Activated naive CD4-positive, alpha-beta T cell treated with anti-CD3 and anti-CD28 coated beads for 36 hours (primary cell): ENCODE measurements at regions of chrX and their contacts with region 1.

Region 1: GRCh38 chrX:71671043-71671780 is 3.9 kb downstream of the LOC101059915 start:
- DNase-seq: peak; percentile 80
- H3K4me3 Mint-ChIP-seq: no peak overlapping the region
- H3K27ac Mint-ChIP-seq: no peak overlapping the region
- H3K4me1 Mint-ChIP-seq: peaks cover 20% of the 10 kb centered on the region
- H3K27me3 Mint-ChIP-seq: peaks cover 3% of the 10 kb centered on the region

Region 2: DNA sequence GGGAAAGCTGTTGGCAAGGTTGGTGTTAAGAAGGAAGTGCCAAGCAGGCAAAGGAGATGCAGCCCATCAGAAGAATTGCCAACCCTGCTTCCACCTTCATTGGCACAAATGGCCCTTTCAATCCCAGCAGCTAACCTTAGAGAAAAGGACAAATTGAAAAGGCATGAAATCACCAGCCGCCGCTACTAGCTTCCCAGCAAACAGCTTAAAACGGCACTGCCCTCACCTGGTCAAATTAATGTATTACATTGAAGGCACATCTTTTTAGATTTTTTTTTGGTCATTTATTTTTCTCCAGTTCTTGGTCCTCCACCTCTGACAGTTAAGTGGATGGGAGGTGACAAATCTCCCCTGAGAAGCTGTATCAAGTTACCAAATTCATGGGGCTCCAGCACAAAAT is 188.4 kb after region 1 on chrX:
- CTCF ChIA-PET with region 1: interaction called, 11 read pairs
- intact Hi-C with region 1: loop called (anchors 1 kb)
- DNase-seq: peak; percentile 58
- H3K4me3 Mint-ChIP-seq: no peak overlapping the region
- H3K27ac Mint-ChIP-seq: no peak overlapping the region
- H3K4me1 Mint-ChIP-seq: no peaks in the 10 kb centered on the region
- H3K27me3 Mint-ChIP-seq: peaks cover 3% of the 10 kb centered on the region

Region 3: DNA sequence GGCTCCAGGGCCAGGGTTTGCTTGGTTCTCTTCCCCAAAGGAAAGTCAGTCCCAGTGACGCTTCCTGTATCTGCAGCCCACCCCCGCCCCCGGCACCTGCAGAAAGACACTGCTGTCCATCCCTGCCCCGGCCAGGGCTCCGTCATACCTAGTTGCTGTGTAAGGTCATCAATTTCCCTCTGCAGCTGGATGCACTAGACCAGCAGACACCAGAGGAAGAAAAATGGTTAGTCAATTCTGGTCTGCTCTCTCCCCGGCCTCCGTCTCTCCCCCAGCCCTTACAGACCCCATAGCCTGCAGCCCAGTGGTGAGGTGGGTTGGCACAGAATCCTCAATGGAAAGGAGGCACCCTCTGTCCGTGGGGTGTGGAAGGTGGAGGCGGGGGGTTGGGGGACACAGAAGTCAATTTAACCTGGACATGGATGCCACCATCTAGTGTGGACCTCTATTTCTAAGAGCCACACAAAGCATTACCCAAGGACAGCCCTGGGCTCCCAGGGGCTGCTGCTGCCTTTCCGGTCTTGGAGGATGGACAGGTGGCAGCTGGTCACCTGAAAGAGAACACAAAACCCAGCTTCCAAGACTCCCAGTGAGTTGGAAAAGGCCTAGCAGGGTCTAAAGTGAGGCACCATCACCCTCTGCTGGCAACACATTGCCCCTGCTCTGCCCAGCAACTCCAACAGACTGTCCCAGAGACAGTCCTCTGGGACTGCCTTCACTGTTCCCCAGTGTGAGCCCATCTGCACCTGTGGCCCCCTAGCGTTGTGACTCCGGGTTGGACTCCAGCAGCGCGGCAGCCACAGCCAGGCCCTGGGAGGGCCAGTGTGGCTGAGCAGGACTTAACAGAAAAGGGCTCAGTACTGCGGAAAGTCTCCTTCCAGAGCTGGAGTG is 199.2 kb after region 1 on chrX:
- CTCF ChIA-PET with region 1: no interaction called
- intact Hi-C with region 1: loop called (anchors 1 kb)
- DNase-seq: peak; percentile 14
- H3K4me3 Mint-ChIP-seq: no peak overlapping the region
- H3K27ac Mint-ChIP-seq: no peak overlapping the region
- H3K4me1 Mint-ChIP-seq: peaks cover 18% of the 10 kb centered on the region
- H3K27me3 Mint-ChIP-seq: peaks cover 13% of the 10 kb centered on the region

Region 4: DNA sequence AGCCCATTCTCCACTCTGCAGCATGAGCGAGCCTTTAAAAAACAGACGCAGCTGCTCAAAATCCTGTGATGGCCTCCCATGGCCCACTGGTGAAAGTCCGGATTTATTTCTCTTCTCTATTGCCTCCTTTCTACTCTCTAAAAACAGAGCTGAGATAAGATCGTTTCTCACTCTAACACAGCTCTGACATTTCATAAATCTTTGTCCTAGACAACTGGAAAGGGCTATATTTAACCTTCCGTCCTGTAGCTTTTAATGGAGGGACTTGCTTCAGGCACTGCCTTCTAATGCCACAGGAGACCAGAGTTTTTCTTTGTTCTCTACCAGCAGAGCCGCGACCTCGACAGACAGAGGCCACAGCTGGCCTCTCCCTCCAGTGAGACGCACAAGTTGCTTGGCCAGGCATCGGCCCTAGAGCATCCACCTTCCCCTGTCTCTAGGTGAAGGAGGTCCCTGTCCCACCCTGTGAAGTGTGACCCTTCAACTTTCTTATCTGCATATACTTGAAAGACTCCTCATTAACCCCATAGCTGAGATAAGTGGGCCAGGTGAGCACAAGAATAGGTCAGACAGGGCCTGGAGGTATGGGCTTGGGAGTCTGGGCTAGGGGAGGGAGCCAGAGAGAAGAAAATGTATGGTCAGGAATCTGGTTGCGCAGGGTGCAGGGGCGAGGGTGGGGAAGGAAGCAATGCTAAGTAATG is 410.5 kb after region 1 on chrX:
- CTCF ChIA-PET with region 1: no interaction called
- intact Hi-C with region 1: no loop called
- DNase-seq: no peak
- H3K4me3 Mint-ChIP-seq: no peak overlapping the region
- H3K27ac Mint-ChIP-seq: no peak overlapping the region
- H3K4me1 Mint-ChIP-seq: peaks cover 5% of the 10 kb centered on the region
- H3K27me3 Mint-ChIP-seq: no peaks in the 10 kb centered on the region